Activated CD4-positive, alpha-beta T cell treated with anti-CD3 and anti-CD28 coated beads, Interleukin-2, amount 10 ng/mL, durations not matched to agents 24 days and 14 days (primary cell): ENCODE measurements at regions of chr2 and their contacts with region 1.

Region 1: GRCh38 chr2:240513549-240514287 is 44.1 kb downstream of the ANKMY1 start:
- DNase-seq: peak; percentile 94
- H3K4me3 Mint-ChIP-seq: peak overlapping the region; percentile 31
- H3K27ac Mint-ChIP-seq: peak overlapping the region; percentile 69
- H3K4me1 Mint-ChIP-seq: peaks cover 7% of the 10 kb centered on the region
- H3K27me3 Mint-ChIP-seq: no peaks in the 10 kb centered on the region

Region 2: GRCh38 chr2:240624950-240625621 is 111.4 kb after region 1 on chr2 and contains the start of gene GPR35:
- intact Hi-C with region 1: no loop called
- DNase-seq: peak; percentile 91
- H3K4me3 Mint-ChIP-seq: peak within 1 kb of the TSS; percentile 82
- H3K27ac Mint-ChIP-seq: peak within 1 kb of the TSS; percentile 89
- H3K4me1 Mint-ChIP-seq: peaks cover 51% of the 10 kb centered on the region
- H3K27me3 Mint-ChIP-seq: no peaks in the 10 kb centered on the region
- total RNA-seq, gene GPR35: 7.1 and 8.7 TPM in 2 replicates

Region 3: DNA sequence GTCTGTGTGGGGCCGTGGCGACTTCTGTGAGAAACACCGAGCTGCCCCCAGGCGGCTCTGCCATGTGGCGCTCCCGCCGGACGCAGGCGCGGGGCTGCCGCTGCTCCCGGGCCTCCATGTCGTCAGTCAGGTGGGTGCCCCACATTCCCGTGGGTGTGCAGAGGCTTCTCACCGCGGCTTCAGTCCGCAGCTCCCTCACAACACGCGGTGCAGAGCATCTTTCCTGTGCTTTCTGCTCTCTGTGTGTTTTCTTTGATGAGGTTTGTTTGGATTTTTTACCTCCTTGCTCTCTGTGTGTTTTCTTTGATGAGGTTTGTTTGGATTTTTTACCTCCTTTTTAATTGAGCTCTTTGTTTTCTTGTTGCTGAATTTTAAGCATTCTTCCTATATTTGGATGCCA is 190.9 kb after region 1 on chr2:
- intact Hi-C with region 1: loop called (anchors 10 kb)
- DNase-seq: peak; percentile 75
- H3K4me3 Mint-ChIP-seq: peak overlapping the region; percentile 33
- H3K27ac Mint-ChIP-seq: no peak overlapping the region
- H3K4me1 Mint-ChIP-seq: peaks cover 15% of the 10 kb centered on the region
- H3K27me3 Mint-ChIP-seq: peaks cover 38% of the 10 kb centered on the region